Lower leg skin (tissue), 4 donors: ENCODE measurements at regions of chr15 and their contacts with region 1.

Region 1: GRCh38 chr15:79702621-79703020 is 194.2 kb downstream of the MTHFS start:
- DNase-seq: no peak
- H3K4me3 ChIP-seq: no peak overlapping the region
- CTCF ChIP-seq: no peak
- POLR2A ChIP-seq: no peak

Region 2: DNA sequence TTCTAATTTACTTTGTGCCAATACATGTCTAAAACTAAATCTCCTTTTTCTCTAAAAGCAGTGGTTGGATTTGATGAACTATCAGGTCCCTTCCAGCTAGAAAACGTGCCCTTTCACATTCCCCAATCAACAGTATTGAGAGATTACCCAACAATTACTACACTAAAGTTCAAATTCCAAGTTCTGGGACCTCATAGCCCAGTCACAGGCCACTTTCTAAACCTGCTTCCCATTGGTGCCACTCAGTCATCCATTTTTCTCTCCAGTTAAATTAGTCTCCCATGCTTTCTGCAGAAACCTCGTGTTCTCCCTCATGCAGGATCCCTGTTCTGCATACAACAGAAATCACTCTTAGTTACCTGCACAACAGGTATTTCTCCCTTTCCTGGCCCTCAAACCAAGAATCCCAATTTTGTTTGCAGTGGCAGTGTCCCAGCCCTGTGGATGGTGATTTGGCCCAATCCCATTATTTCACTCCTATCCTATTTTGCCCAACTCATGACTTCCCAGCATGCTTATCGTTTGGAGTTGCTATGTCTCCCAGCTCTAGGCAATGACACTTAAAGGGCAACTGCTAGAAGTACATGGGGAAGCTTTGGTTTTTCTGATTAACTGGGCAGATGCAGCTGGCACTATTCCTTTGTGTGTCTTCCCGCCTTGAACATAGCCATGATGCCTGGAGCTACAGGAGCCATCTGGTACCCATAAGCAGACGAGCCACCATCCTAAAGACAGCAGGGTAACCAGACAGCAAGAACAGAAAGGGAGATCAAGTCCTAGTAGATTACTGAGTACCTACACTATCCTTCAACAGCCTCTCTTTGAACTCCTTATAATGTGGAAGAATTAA is 46.2 kb before region 1 on chr15:
- intact Hi-C with region 1: no loop called
- DNase-seq: no peak
- H3K4me3 ChIP-seq: no peak overlapping the region
- CTCF ChIP-seq: no peak
- POLR2A ChIP-seq: no peak

Region 3: GRCh38 chr15:81548365-81549120 is 1845.9 kb after region 1 on chr15:
- intact Hi-C with region 1: loop called (anchors 10 kb)
- DNase-seq: no peak
- H3K4me3 ChIP-seq: no peak overlapping the region
- CTCF ChIP-seq: no peak
- POLR2A ChIP-seq: no peak